ENCODE measurements at regions of chr6 and their contacts with region 1.

Region 1: DNA sequence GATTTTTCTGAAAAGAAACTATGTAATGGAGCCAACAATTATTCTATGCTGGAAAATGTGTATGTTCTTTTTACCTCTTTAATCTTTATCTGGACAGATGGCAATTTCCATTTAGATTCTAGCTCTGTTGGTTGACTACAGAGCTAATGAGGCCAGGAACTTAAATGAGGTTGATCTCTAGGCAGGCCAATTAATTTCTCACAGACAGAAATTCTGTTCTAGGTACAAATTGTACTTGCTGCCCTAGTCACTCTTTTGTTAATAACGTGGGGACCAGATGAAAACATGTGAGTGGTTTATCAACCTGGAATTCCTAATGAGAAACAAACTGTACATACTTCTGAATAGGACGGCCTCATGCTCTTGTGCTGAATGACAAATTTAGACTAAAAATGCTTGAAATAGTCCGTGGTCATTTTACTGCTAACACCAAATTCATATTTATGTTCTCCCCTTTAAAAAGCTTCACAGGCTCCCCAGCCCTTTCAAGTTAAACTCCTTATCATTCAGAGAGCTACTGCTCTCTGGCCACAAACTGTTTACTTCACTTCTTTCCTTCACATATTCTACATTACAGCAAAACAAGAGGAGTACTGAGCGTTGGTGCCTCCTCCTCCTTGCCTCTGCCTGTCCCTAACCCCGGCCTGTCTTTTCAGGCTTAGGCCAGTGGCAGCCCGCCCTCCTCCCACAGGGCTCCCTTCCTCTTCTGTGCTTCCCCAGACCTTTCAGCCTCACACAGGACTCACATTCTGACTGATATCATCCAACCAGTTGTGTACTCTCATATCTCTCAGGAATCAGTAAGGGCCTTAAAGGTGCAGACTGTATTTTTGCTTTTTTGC is 41.4 kb downstream of the DTNBP1 start:
- DNase-seq: no peak
- H3K4me3 ChIP-seq: no peak overlapping the region
- H3K27ac ChIP-seq: no peak overlapping the region
- H3K27me3 ChIP-seq: no peaks in the 10 kb centered on the region
- CTCF ChIP-seq: no peak

Region 2: GRCh38 chr6:14910692-14911547 is 710.5 kb before region 1 on chr6:
- CTCF ChIA-PET with region 1: no interaction called
- POLR2A ChIA-PET with region 1: no interaction called
- DNase-seq: no peak
- H3K4me3 ChIP-seq: no peak overlapping the region
- H3K27ac ChIP-seq: no peak overlapping the region
- H3K27me3 ChIP-seq: no peaks in the 10 kb centered on the region
- CTCF ChIP-seq: no peak

Region 3: DNA sequence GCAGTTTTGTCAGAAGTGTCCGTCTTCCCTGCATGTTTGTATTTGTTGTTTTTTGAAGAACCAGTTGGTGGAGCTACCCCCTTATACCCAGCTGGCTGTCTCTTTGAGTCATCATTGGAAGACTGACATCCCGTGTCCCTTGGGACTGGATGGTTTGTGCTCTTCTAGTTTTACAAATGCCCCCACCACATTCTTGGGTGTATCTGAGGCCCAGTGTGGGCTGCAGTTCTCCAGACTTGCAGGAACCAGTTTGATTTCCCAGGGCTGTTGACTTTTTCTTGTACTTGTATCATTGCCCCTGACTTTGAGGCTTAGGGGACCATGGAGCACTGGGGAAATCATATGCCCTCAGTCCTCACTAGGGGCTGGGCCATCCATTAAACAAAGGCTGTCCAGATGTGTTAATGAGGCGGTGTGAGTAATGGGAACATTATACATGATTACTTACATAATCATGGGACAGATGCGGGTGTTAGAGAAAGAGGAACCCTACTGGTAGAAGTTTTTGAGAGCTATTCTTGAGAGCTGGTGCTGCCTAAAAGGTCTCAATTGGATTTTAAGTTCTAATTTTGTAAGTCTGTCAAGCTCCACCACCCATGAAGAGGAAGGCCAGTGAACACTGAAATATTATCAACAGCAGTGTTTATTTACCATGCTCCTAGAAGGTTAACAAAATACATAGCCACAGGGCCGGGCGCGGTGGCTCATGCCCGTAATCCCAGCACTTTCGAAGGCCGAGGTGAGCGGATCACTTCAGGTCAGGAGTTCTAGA is 367.2 kb before region 1 on chr6:
- CTCF ChIA-PET with region 1: interaction called, 11 read pairs
- POLR2A ChIA-PET with region 1: no interaction called
- DNase-seq: no peak
- H3K4me3 ChIP-seq: no peak overlapping the region
- H3K27ac ChIP-seq: no peak overlapping the region
- H3K27me3 ChIP-seq: no peaks in the 10 kb centered on the region
- CTCF ChIP-seq: no peak

Region 4: DNA sequence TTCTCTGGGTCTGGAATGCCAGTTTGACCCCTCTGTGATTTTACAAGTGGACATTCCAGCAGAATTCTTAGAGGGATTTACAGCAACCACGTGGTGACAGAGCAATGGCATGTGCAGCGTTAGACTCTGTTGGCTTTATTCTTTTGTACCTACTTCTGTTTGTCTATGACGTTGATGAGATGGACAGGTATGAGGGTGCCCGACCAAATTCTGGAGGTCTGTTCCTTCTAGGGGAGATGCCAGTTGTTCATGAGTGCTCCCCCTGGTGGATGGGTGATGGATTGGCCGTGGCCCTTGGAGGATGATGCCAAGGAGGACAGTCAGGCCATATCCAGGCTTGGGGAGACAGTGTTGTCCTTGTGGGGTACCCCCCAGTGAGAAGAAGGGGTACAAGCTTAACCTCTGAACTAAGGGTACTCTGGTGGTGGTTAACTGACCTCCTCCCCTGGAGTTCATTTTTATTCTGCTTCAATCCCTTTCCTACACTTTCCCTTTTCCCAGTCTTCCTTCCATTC is 157.2 kb before region 1 on chr6:
- CTCF ChIA-PET with region 1: interaction called, 10 read pairs
- POLR2A ChIA-PET with region 1: no interaction called
- DNase-seq: no peak
- H3K4me3 ChIP-seq: no peak overlapping the region
- H3K27ac ChIP-seq: no peak overlapping the region
- H3K27me3 ChIP-seq: no peaks in the 10 kb centered on the region
- CTCF ChIP-seq: peak; percentile 59

Region 5: DNA sequence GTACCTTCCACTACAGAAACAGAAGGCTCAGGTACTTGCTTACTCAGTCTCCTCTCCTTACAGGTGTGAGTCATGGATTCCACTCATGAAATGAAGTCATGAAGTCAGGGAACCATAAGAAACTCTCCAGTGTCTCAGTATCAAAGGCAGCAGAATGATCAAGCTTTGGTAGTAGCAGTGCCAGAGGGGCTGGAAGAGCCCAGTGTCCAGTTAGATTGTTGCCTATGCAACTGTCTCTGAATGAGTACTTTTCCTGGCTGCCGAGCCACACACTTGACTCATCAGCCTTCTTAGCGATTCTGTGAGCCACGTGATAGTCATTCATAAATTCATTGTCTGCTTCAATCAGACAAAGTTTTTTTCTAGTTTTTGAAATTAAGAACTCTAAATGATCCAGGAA is 93.6 kb after region 1 on chr6:
- CTCF ChIA-PET with region 1: no interaction called
- POLR2A ChIA-PET with region 1: no interaction called
- DNase-seq: no peak
- H3K4me3 ChIP-seq: no peak overlapping the region
- H3K27ac ChIP-seq: no peak overlapping the region
- H3K27me3 ChIP-seq: peaks cover 3% of the 10 kb centered on the region
- CTCF ChIP-seq: no peak